Activated T-helper 1 cell treated with anti-CD3 and anti-CD28 coated beads, Interleukin-12 subunit alpha, Interleukin-12 subunit beta, Interleukin-2, Interleukin-4 antibody, amounts not matched to agents 30 ng/mL and 10 ng/mL and 1 ng/mL, durations not matched to agents 14 hours and 24 hours and 36 hours (primary cell): ENCODE measurements at regions of chr12 and their contacts with region 1.

Region 1: DNA sequence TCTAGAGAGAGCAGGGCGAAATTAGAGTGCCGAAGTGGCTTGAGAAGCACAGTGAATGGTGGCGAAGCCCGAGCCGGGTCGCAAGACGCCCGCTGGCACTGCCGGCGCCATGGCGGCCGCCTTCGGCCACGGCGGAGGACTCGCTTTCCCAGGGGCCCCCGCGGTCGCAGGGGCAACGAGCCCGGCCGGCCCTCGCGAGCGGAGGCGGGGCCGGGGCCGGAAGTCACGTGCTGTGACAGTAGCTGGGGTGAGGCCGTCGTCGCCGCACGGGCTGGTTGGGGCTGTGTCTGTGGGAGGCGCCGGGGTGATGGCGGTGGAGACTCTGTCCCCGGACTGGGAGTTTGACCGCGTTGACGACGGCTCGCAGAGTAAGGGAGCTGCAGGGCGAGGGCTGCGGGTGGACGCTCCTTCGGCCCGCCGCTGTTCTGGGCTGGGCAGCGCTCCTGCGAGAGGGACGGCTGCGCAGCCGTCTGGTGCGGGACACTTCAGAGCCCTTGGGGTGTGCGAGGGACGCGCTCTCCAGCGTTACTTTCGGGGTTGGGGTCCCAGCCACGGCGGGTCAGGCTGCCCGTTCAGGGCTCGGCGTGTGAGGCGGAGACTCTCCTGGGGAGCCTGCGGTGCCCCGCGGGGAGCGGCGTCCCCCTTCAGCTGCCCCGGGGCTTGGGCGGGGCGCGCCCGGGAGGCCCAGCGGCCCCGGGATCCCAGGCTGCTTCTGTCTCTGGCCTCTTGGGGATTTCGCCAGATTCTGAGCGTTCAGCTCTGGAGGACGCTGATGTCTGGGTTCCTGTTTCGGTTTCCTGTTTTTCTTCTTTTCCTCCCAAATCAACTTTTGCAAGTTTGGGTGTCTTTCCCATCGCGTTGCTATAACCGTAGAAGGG is at the start of gene WASHC4:
- DNase-seq: peak; percentile 96
- H3K4me3 Mint-ChIP-seq: peak within 1 kb of the TSS; percentile 95
- H3K27ac Mint-ChIP-seq: peak within 1 kb of the TSS; percentile 94
- H3K4me1 Mint-ChIP-seq: peaks cover 44% of the 10 kb centered on the region
- H3K27me3 Mint-ChIP-seq: peaks cover 24% of the 10 kb centered on the region
- total RNA-seq, gene WASHC4: 34.5 and 36.3 TPM in 2 replicates

Region 2: GRCh38 chr12:103495479-103496456 is 1612.0 kb before region 1 on chr12 and contains the start of gene C12orf42:
- intact Hi-C with region 1: loop called (anchors 5 kb)
- DNase-seq: peak; percentile 16
- H3K4me3 Mint-ChIP-seq: peak within 1 kb of the TSS; percentile 70
- H3K27ac Mint-ChIP-seq: peak within 1 kb of the TSS; percentile 53
- H3K4me1 Mint-ChIP-seq: peaks cover 27% of the 10 kb centered on the region
- H3K27me3 Mint-ChIP-seq: peaks cover 28% of the 10 kb centered on the region
- total RNA-seq, gene C12orf42: not detected in 2 replicates

Region 3: DNA sequence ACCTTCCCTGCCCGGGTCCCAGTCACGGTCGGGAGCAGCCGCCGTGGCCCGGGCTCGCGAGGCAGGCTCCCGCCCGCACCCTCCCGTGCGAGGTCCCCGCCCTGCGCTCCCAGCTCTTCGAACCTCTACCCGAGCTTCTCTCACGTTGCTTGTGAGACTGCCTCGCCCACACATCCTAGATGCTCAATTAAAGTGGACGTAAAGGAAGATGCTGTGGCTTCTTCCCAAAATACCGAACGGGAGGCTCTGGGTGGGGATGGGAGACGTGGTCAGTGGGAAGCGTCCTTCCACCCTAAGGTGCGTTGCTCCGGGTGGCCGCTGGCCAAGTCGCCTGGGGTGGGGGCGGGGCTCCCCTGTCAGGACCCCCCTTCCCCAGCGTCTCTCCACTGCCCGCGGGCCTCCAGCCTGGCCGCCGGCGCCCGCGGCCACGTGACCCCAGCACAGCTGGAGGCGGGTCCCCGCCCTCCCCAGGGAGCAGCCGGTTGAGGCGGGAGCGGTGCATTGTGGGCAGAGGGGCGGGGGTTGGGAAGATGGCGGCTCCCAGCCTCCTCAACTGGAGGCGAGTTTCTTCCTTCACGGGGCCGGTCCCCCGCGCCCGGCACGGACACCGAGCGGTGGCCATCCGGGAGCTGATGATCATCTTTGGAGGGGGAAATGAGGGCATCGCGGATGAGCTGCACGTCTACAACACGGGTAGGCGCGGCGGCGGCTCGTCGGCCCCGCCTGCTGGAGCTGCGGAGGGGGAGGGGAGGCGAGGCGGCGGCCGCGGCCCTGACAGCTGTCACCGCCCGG is 1043.5 kb before region 1 on chr12 and contains the start of gene HCFC2:
- intact Hi-C with region 1: loop called (anchors 5 kb)
- DNase-seq: peak; percentile 88
- H3K4me3 Mint-ChIP-seq: peak within 1 kb of the TSS; percentile 95
- H3K27ac Mint-ChIP-seq: peak within 1 kb of the TSS; percentile 86
- H3K4me1 Mint-ChIP-seq: peaks cover 36% of the 10 kb centered on the region
- H3K27me3 Mint-ChIP-seq: peaks cover 24% of the 10 kb centered on the region
- total RNA-seq, gene HCFC2: 8.5 and 8.9 TPM in 2 replicates

Region 4: GRCh38 chr12:104381731-104382480 is 725.8 kb before region 1 on chr12:
- intact Hi-C with region 1: loop called (anchors 5 kb)
- DNase-seq: peak; percentile 69
- H3K4me3 Mint-ChIP-seq: peak overlapping the region; percentile 52
- H3K27ac Mint-ChIP-seq: peak overlapping the region; percentile 33
- H3K4me1 Mint-ChIP-seq: peaks cover 20% of the 10 kb centered on the region
- H3K27me3 Mint-ChIP-seq: peaks cover 2% of the 10 kb centered on the region

Region 5: DNA sequence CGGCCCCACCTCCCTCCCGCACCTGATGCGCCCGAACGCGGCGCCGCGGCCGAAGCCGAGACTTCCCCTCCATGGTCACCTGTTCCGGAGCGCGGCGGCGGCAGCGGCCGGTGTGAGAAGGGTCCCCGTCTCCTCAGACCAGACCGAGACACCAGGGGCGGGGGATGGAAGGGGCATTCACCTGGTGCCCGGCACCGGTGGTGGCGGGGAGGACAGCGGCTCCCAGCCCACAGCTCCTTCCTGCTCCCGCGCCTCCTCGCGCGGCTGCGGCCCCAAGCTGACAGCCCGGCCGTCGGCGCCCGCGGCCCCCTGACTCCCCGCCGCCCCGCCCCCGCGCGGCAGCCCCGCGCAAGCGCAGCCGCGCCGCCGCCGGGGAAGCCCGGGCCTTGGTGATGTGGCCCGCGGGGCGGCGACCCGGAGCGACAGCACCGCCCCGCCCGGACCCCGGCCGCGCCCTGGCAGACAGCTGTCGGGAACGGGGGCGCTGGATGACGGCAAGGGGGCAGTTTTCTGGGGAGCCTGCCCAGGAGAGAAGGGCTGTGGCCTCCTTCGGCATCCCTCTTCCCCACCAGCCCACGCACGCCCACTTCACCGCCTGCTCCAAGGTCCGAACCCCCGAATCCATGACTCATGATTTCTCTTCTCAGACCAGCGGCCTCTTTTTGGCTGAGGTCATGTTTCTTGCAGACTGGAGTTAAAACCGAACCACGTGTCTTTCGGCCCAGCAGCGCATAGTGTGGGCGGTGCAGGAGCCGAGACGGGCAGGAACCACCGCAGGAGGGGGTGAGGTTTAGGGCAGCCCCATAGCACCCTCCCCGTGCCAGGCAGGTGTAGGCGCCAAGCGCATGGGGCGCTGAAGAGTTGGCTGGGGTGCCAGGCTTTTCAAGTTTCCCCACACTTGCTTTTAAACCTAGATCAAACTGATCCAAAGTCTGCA is 149.5 kb before region 1 on chr12 and contains the start of gene SLC41A2:
- intact Hi-C with region 1: loop called (anchors 1 kb)
- DNase-seq: peak; percentile 80
- H3K4me3 Mint-ChIP-seq: peak within 1 kb of the TSS; percentile 90
- H3K27ac Mint-ChIP-seq: peak within 1 kb of the TSS; percentile 96
- H3K4me1 Mint-ChIP-seq: peaks cover 44% of the 10 kb centered on the region
- H3K27me3 Mint-ChIP-seq: peaks cover 24% of the 10 kb centered on the region
- total RNA-seq, gene SLC41A2: 16.4 and 19.0 TPM in 2 replicates

Region 6: DNA sequence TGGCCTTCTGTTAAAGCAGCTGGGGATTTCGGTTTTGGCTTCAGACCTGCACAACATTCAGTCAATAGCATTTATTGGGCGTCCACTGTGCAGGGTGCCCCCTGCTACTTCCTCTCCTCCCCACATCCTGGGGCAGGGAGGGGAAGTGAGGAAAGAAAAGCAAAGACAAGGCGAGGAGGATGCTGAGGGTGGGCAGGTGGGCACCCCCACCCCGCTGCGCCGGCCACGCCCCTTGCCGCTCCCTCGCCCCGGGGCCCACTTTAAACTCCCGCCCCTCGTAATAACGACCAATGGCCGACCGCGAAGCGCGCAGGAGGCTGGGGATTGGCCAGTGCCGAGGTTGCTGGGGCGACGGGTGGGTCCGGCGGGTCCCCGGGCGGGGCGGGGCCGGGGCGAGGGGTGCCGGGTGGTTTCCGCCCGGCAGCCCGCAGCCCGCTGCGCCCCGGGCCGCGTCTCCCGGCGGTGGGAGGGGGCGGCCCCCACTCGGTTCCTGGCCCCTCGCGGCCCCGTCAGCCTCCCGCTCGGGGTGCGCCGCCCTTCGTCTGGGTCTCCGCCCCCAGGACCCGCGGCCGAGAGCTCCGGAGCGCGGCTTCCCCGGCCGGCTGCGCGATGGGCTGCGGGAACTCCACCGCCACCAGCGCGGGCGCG is 222.7 kb after region 1 on chr12 and contains the start of gene C12orf75:
- intact Hi-C with region 1: loop called (anchors 2 kb)
- DNase-seq: peak; percentile 93
- H3K4me3 Mint-ChIP-seq: peak within 1 kb of the TSS; percentile 87
- H3K27ac Mint-ChIP-seq: peak within 1 kb of the TSS; percentile 91
- H3K4me1 Mint-ChIP-seq: peaks cover 83% of the 10 kb centered on the region
- H3K27me3 Mint-ChIP-seq: no peaks in the 10 kb centered on the region
- total RNA-seq, gene C12orf75: 87.8 and 93.4 TPM in 2 replicates